Naive thymus-derived CD4-positive, alpha-beta T cell (primary cell): ENCODE measurements at regions of chr16 and their contacts with region 1.

Region 1: DNA sequence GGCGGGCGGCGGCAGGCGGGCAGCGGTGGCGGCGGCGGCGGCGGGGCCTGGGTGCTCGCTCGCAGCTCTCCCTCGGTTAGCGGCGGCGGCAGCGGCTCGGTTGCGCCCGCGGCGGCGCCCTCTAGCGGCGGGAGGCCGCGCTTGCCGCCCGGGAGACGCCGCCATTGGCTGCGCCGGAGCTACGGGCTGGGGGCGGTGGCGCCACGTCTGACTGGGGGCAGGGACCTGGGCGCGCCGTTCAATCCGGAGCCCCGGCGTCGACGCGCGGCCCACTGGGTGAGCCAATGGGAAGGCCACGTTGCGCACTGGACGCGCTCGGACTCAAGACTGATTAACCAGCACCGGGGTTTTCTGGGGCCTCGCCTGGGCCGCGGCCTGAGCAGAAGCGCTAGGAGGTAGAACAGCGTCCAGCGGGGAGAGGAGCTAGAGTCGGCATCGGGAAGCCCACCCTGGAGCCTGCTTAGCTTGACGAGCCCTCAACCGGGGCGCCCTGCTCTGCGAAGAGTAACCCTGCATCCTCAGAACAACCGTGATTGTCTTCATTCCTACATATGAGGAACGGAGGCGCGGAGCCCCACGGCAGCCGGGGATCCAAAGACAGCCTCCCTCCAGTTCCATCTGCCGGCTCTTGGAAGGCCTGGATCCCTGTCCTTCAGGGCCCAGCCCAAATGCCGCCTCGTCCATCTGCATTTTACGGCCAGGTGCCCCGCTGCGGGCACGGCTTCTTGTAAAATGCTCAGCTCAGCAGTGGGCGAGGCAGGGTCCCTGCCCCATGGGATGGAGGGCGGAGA is at the start of gene ZC3H7A:
- DNase-seq: peak; percentile 91 to 97 (median 95)
- ATAC-seq: peak; percentile 95
- H3K4me3 ChIP-seq: peak within 1 kb of the TSS; percentile 82
- H3K4me3 Mint-ChIP-seq: peak within 1 kb of the TSS; percentile 90 to 97 (median 94)
- H3K27ac ChIP-seq: peak within 1 kb of the TSS; percentile 97
- H3K27ac Mint-ChIP-seq: peak within 1 kb of the TSS; percentile 93 to 99 (median 98)
- H3K4me1 ChIP-seq: peaks cover 41 to 63% of the 10 kb centered on the region in 2 donors
- H3K4me1 Mint-ChIP-seq: peaks cover 55 to 84% (median 78%) of the 10 kb centered on the region in 7 donors
- H3K27me3 ChIP-seq: no peaks in the 10 kb centered on the region
- H3K27me3 Mint-ChIP-seq: no peaks in the 10 kb centered on the region
- total RNA-seq, gene ZC3H7A: 86.9 to 102 (median 88.6) TPM

Region 2: DNA sequence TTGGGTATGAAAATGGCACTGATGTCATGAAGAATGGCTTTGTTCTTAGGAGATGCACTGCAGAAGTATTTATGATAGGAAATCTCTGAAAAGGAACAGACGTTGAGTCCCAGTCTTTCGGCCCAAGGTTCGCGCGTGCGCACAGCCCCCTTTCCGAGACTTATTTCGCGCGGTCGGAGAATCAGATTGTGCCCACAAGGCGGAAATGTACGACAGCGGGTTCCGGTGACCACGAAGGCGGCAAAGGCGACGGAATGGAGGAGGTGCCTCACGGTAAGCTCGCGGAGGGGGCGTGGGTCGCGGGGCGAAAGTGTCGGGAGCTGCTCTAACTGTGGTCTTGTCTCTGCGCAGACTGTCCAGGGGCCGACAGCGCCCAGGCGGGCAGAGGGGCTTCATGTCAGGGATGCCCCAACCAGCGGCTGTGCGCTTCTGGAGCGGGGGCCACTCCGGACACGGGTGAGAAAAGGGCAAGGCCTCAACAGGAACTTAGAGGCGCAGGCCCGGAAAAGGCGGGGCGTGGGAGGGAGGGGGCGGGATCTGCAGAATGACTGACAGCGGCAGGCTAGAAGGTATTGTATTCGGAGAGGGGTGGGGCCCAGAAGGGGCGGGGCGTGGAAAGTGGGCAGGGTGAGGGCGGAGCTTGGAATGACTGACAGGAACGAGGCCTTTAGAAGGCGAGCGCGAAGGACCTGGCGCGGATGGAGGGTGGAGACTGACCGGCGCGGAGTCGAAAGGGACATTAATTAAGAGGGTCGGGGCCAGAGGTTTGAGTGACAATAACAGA is 1053.6 kb before region 1 on chr16 and contains the start of gene NUBP1:
- CTCF ChIA-PET with region 1: no interaction called
- POLR2A ChIA-PET with region 1: no interaction called
- intact Hi-C with region 1: loop called in 1 of 2 experiments (anchors 10 kb)
- DNase-seq: peak; percentile 97 to 99 (median 99)
- ATAC-seq: peak; percentile 98
- H3K4me3 ChIP-seq: peak within 1 kb of the TSS; percentile 74
- H3K4me3 Mint-ChIP-seq: peak within 1 kb of the TSS; percentile 84 to 99 (median 95)
- H3K27ac ChIP-seq: peak within 1 kb of the TSS; percentile 92
- H3K27ac Mint-ChIP-seq: peak within 1 kb of the TSS; percentile 98 to 100 (median 99)
- H3K4me1 ChIP-seq: peaks cover 7 to 10% of the 10 kb centered on the region in 2 donors
- H3K4me1 Mint-ChIP-seq: peaks cover 15 to 48% (median 27%) of the 10 kb centered on the region in 7 donors
- H3K27me3 ChIP-seq: no peaks in the 10 kb centered on the region
- H3K27me3 Mint-ChIP-seq: peaks cover 0 to 2% (median 0%) of the 10 kb centered on the region in 5 donors
- total RNA-seq, gene NUBP1: 24.0 to 30.0 (median 25.5) TPM

Region 3: GRCh38 chr16:11586856-11587642 is 210.3 kb before region 1 on chr16 and contains the start of gene LITAF:
- CTCF ChIA-PET with region 1: interaction called, 4 read pairs
- POLR2A ChIA-PET with region 1: no interaction called
- intact Hi-C with region 1: loop called (anchors 5 to 10 kb)
- DNase-seq: peak in 8 of 9 donors; percentile 52 to 75 (median 57)
- ATAC-seq: peak; percentile 71
- H3K4me3 ChIP-seq: peak within 1 kb of the TSS; percentile 88
- H3K4me3 Mint-ChIP-seq: peak within 1 kb of the TSS; percentile 91 to 100 (median 96)
- H3K27ac ChIP-seq: peak within 1 kb of the TSS; percentile 94
- H3K27ac Mint-ChIP-seq: peak within 1 kb of the TSS; percentile 90 to 99 (median 97)
- H3K4me1 ChIP-seq: peaks cover 32 to 38% of the 10 kb centered on the region in 2 donors
- H3K4me1 Mint-ChIP-seq: peaks cover 29 to 45% (median 37%) of the 10 kb centered on the region in 7 donors
- H3K27me3 ChIP-seq: no peaks in the 10 kb centered on the region
- H3K27me3 Mint-ChIP-seq: peaks cover 0 to 7% (median 0%) of the 10 kb centered on the region in 5 donors
- total RNA-seq, gene LITAF: 126 to 278 (median 208) TPM

Region 4: GRCh38 chr16:11759997-11760396 is 37.4 kb before region 1 on chr16:
- CTCF ChIA-PET with region 1: no interaction called
- POLR2A ChIA-PET with region 1: interaction called, 3 read pairs
- intact Hi-C with region 1: loop called in 1 of 2 experiments (anchors 5 kb)
- DNase-seq: no peak
- ATAC-seq: no peak
- H3K4me3 ChIP-seq: no peak overlapping the region
- H3K4me3 Mint-ChIP-seq: no peak overlapping the region
- H3K27ac ChIP-seq: no peak overlapping the region
- H3K27ac Mint-ChIP-seq: peak overlapping the region in 1 of 9 donors; percentile 77
- H3K4me1 ChIP-seq: no peaks in the 10 kb centered on the region
- H3K4me1 Mint-ChIP-seq: peaks cover 0 to 5% (median 0%) of the 10 kb centered on the region in 7 donors
- H3K27me3 ChIP-seq: no peaks in the 10 kb centered on the region
- H3K27me3 Mint-ChIP-seq: no peaks in the 10 kb centered on the region

Region 5: GRCh38 chr16:11816103-11816502 is 18.7 kb after region 1 on chr16:
- CTCF ChIA-PET with region 1: no interaction called
- POLR2A ChIA-PET with region 1: no interaction called
- intact Hi-C with region 1: loop called in 1 of 2 experiments (anchors 2 kb)
- DNase-seq: no peak
- ATAC-seq: no peak
- H3K4me3 ChIP-seq: no peak overlapping the region
- H3K4me3 Mint-ChIP-seq: no peak overlapping the region
- H3K27ac ChIP-seq: no peak overlapping the region
- H3K27ac Mint-ChIP-seq: no peak overlapping the region
- H3K4me1 ChIP-seq: no peaks in the 10 kb centered on the region
- H3K4me1 Mint-ChIP-seq: peaks cover 0 to 6% (median 3%) of the 10 kb centered on the region in 7 donors
- H3K27me3 ChIP-seq: no peaks in the 10 kb centered on the region
- H3K27me3 Mint-ChIP-seq: no peaks in the 10 kb centered on the region

Region 6: GRCh38 chr16:12079412-12079965 is 282.1 kb after region 1 on chr16:
- CTCF ChIA-PET with region 1: no interaction called
- POLR2A ChIA-PET with region 1: interaction called, 5 read pairs
- intact Hi-C with region 1: loop called in 1 of 2 experiments (anchors 5 kb)
- DNase-seq: peak in 5 of 9 donors; percentile 42 to 61 (median 52)
- ATAC-seq: peak; percentile 34
- H3K4me3 ChIP-seq: peak overlapping the region; percentile 24
- H3K4me3 Mint-ChIP-seq: peak overlapping the region; percentile 54 to 94 (median 78)
- H3K27ac ChIP-seq: peak overlapping the region; percentile 84
- H3K27ac Mint-ChIP-seq: peak overlapping the region; percentile 88 to 97 (median 96)
- H3K4me1 ChIP-seq: peaks cover 40 to 66% of the 10 kb centered on the region in 2 donors
- H3K4me1 Mint-ChIP-seq: peaks cover 34 to 93% (median 77%) of the 10 kb centered on the region in 7 donors
- H3K27me3 ChIP-seq: no peaks in the 10 kb centered on the region
- H3K27me3 Mint-ChIP-seq: no peaks in the 10 kb centered on the region

Region 7: DNA sequence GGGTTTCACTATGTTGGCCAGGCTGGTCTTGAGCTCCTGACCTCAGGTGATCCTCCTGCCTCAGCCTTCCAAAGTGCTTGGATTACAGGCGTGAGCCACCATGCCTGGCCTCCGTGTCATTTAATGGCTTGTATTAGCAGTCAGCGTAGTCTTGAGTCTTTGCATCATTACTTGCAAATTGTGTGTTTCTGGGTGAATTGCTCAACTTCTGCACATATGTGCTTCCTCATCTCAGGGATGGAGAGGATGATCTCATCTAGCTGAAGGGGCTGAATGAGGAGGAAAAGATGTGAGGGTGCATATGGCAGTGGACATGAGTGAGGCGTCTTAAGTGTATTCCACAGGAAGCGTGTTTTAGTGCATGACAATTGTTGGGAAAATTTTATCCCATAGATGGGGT is 334.9 kb after region 1 on chr16:
- CTCF ChIA-PET with region 1: no interaction called
- POLR2A ChIA-PET with region 1: no interaction called
- intact Hi-C with region 1: no loop called
- DNase-seq: no peak
- ATAC-seq: peak; percentile 38
- H3K4me3 ChIP-seq: no peak overlapping the region
- H3K4me3 Mint-ChIP-seq: no peak overlapping the region
- H3K27ac ChIP-seq: no peak overlapping the region
- H3K27ac Mint-ChIP-seq: no peak overlapping the region
- H3K4me1 ChIP-seq: no peaks in the 10 kb centered on the region
- H3K4me1 Mint-ChIP-seq: peaks cover 0 to 6% (median 0%) of the 10 kb centered on the region in 7 donors
- H3K27me3 ChIP-seq: no peaks in the 10 kb centered on the region
- H3K27me3 Mint-ChIP-seq: no peaks in the 10 kb centered on the region